ENCODE measurements at regions of chr2 and their contacts with region 1.

Region 1: DNA sequence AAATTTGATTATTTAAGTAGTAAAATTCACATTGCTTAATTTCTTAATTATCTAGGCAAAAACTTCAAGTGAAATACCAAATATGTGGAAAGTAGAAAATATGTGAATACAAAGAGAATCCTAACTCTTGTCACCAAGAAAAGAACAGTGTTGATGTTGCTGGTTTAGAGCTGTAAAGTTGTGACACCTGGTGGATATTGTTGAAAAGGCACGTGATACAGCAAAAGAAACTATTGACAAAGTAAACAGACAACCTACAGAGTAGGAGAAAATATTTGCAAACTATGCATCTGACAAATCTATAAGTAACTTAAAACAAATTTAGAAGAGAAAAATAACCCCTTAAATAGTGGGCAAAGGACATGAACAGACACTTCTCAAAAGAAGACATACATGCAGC is 25.6 kb upstream of the ZC3H15 start:
- DNase-seq: peak; percentile 39
- H3K4me3 ChIP-seq: no peak overlapping the region
- H3K27ac ChIP-seq: no peak overlapping the region
- H3K4me1 ChIP-seq: no peaks in the 10 kb centered on the region
- H3K27me3 ChIP-seq: no peaks in the 10 kb centered on the region
- CTCF ChIP-seq: peak; percentile 8 to 39
- POLR2A ChIP-seq: no peak

Region 2: DNA sequence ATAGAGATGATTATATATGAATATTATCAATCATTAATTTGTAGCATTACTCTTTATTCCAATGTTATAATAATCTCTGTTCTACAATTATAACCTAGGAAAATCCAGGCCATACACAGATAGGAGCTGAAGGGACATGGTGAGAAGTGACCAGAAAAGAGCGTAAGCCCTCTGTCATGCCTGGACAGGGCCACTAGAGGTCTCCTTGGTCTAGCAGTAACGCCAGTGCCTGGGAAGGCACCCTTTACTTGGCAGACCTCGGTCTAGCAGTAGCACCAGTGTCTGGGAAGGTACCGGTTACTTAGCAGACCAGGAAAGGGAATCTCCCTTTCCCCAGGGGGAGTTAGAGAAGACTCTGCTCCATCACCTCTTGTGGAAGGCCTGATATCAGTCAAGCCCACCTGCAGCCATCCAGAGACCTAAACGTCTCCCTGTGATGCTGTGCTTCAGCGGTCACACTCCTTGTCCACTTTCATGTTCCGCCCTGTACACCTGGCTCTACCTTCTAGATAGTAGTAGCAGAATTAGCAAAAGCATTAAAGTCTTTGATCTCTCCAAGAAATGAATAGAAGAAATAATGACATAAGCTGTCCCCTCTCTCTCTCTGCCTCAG is 1169.3 kb before region 1 on chr2:
- CTCF ChIA-PET with region 1: interaction called, 29 read pairs
- POLR2A ChIA-PET with region 1: no interaction called
- dilution Hi-C with region 1: no loop called
- intact Hi-C with region 1: no loop called
- DNase-seq: peak; percentile 47
- H3K4me3 ChIP-seq: no peak overlapping the region
- H3K27ac ChIP-seq: no peak overlapping the region
- H3K4me1 ChIP-seq: no peaks in the 10 kb centered on the region
- H3K27me3 ChIP-seq: no peaks in the 10 kb centered on the region
- CTCF ChIP-seq: peak; percentile 47 to 75
- POLR2A ChIP-seq: no peak

Measured in endothelial cell of umbilical vein (primary cell).